Uterus (tissue), 4 donors: ENCODE measurements at regions of chr18 and their contacts with region 1.

Region 1: DNA sequence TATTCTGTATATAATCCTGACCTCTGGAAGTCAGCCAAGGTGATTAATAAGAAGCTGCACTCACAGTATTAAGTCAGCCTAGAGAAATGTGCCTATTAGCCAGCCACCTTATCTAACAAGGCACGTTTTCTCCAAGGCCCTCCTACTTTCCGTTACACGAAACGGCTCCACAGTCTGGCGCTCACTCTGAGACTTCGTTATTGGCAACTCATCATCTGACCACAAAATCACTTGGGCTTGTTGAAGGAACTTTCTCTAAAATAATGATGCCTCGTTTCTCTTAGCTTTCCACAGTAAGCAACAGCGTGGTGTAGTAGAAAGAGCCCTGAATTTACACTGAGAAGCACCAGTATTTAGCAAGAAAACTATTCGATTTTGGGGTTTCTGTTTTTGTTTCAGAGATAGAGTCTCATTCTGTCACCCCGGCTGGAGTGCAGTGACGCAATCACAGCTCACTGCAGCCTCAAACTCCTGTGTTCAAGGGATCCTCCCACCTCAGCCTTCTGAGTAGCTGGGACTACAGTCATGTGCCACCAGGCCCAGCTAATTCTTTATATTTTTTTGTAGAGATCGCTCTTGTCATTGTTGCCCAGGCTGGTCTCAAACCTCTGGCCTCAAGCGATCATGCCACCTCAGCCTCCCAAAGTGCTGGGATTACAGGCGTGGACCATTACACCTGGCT is 53.6 kb upstream of the SLC14A1 start:
- DNase-seq: no peak
- H3K4me3 ChIP-seq: no peak overlapping the region
- H3K27ac ChIP-seq: no peak overlapping the region
- H3K4me1 ChIP-seq: no peaks in the 10 kb centered on the region
- H3K27me3 ChIP-seq: no peaks in the 10 kb centered on the region
- CTCF ChIP-seq: no peak
- POLR2A ChIP-seq: no peak

Region 2: GRCh38 chr18:46073474-46074331 is 403.3 kb after region 1 on chr18:
- intact Hi-C with region 1: loop called (anchors 10 kb)
- DNase-seq: peak; percentile 26 to 44
- H3K4me3 ChIP-seq: no peak overlapping the region
- H3K27ac ChIP-seq: no peak overlapping the region
- H3K4me1 ChIP-seq: peaks cover 6 to 10% of the 10 kb centered on the region in 2 donors
- H3K27me3 ChIP-seq: no peaks in the 10 kb centered on the region
- CTCF ChIP-seq: peak; percentile 64 to 70 (median 66)
- POLR2A ChIP-seq: no peak